CD14-positive monocyte (primary cell): ENCODE measurements at regions of chr11 and their contacts with region 1.

Region 1: GRCh38 chr11:129323896-129324512 is 51.6 kb upstream of the BARX2 start:
- DNase-seq: peak; percentile 67 to 79 (median 75)
- H3K4me3 ChIP-seq: peak overlapping the region; percentile 1 to 63 (median 29)
- H3K4me3 Mint-ChIP-seq: peak overlapping the region; percentile 39 to 75
- H3K27ac ChIP-seq: peak overlapping the region; percentile 64 to 77
- H3K27ac Mint-ChIP-seq: peak overlapping the region; percentile 53 to 89 (median 81)
- H3K4me1 ChIP-seq: peaks cover 41 to 50% of the 10 kb centered on the region in 2 donors
- H3K4me1 Mint-ChIP-seq: peaks cover 63% of the 10 kb centered on the region
- H3K27me3 ChIP-seq: no peaks in the 10 kb centered on the region
- H3K27me3 Mint-ChIP-seq: peaks cover 0 to 7% (median 0%) of the 10 kb centered on the region in 3 donors
- CTCF ChIP-seq: no peak

Region 2: DNA sequence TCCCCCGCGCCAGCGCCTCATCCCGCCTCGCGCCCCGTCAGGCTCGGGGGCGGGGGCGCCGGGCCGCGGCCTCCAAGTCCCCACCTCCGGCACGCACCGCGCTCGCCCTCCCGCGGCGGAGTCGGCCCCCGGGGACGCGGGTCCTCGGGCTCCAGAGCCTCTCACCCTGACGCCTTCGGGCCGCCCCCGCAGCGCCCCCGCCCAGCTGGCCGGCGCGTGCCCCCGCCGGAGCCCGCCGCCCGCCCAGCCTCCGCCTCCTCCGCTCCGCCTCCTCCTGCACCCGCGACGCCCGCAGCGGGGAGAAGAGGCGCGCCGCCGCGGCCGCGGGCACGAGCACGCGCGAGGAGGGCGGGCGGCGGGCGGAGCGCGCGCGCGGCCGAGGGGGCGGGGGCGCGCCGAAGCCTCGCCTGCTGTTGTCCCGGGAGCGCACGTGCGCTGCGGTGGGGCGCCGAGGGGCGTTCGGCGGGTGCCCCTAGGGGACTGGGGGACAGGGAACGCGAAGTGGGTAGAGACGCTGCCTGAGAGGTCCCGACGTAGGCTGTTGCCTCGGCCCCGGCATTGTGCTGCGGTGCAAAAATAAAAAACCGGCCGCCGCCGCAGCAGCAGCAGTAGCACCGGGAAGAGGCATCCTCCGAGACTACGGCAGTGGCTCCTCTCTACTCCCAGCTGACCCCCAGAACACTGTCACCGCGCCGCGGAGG is 44.5 kb before region 1 on chr11:
- intact Hi-C with region 1: loop called in 1 of 2 experiments (anchors 5 kb)
- DNase-seq: peak; percentile 62 to 75 (median 65)
- H3K4me3 ChIP-seq: peak overlapping the region; percentile 67 to 82 (median 69)
- H3K4me3 Mint-ChIP-seq: peak overlapping the region; percentile 82 to 95
- H3K27ac ChIP-seq: peak overlapping the region in 1 of 2 donors; percentile 4
- H3K27ac Mint-ChIP-seq: peak overlapping the region in 3 of 7 donors; percentile 4 to 53 (median 28)
- H3K4me1 ChIP-seq: peaks cover 33 to 34% of the 10 kb centered on the region in 2 donors
- H3K4me1 Mint-ChIP-seq: peaks cover 49% of the 10 kb centered on the region
- H3K27me3 ChIP-seq: peaks cover 11% of the 10 kb centered on the region in 2 donors
- H3K27me3 Mint-ChIP-seq: peaks cover 10 to 25% (median 14%) of the 10 kb centered on the region in 3 donors
- CTCF ChIP-seq: no peak

Region 3: DNA sequence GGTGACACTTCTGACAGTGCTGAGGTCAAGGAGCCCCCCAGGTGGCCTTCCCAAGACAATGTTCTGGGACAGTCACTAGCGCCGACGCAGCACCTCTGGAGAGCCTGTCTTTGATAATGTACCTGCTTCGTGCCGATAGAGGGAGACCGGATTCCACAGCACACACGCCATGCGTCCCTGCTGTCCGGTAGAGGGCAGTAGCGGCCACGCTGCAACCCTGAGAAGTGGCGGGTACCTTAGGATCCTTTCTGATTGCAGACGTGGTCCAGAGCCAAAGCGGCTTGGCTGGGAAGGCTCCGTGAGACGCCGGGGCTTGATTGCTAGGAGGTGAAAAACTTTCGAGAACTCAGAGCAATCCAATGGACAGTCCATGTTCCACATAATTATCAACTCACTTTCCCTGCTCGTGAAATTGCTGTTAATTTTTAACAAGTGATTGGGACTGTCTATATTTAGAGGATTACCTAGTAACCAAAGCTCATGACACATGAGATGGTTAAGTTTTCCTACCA is 40.2 kb after region 1 on chr11:
- intact Hi-C with region 1: no loop called
- DNase-seq: peak; percentile 38 to 65 (median 43)
- H3K4me3 ChIP-seq: no peak overlapping the region
- H3K4me3 Mint-ChIP-seq: no peak overlapping the region
- H3K27ac ChIP-seq: no peak overlapping the region
- H3K27ac Mint-ChIP-seq: no peak overlapping the region
- H3K4me1 ChIP-seq: no peaks in the 10 kb centered on the region
- H3K4me1 Mint-ChIP-seq: no peaks in the 10 kb centered on the region
- H3K27me3 ChIP-seq: peaks cover 58 to 91% of the 10 kb centered on the region in 2 donors
- H3K27me3 Mint-ChIP-seq: peaks cover 25 to 50% (median 38%) of the 10 kb centered on the region in 3 donors
- CTCF ChIP-seq: peak; percentile 97